Activated B cell treated with CpG ODN at 0.5 μM for 24 hours (primary cell): ENCODE measurements at regions of chr22 and their contacts with region 1.

Region 1: GRCh38 chr22:31943976-31944699 is at the start of gene YWHAH:
- DNase-seq: peak; percentile 91
- ATAC-seq: peak; percentile 78
- H3K4me3 Mint-ChIP-seq: peak within 1 kb of the TSS; percentile 91
- H3K27ac Mint-ChIP-seq: peak within 1 kb of the TSS; percentile 91
- H3K4me1 Mint-ChIP-seq: peaks cover 16% of the 10 kb centered on the region
- H3K27me3 Mint-ChIP-seq: no peaks in the 10 kb centered on the region
- CTCF ChIP-seq: no peak
- total RNA-seq, gene YWHAH: 44.3 and 48.9 TPM in 2 replicates

Region 2: GRCh38 chr22:31345331-31346254 is 598.5 kb before region 1 on chr22:
- CTCF ChIA-PET with region 1: no interaction called
- POLR2A ChIA-PET with region 1: interaction called, 4 read pairs
- intact Hi-C with region 1: loop called (anchors 5 kb)
- DNase-seq: peak; percentile 89
- ATAC-seq: peak; percentile 58
- H3K4me3 Mint-ChIP-seq: peak overlapping the region; percentile 83
- H3K27ac Mint-ChIP-seq: peak overlapping the region; percentile 80
- H3K4me1 Mint-ChIP-seq: peaks cover 50% of the 10 kb centered on the region
- H3K27me3 Mint-ChIP-seq: no peaks in the 10 kb centered on the region
- CTCF ChIP-seq: peak; percentile 56

Region 3: GRCh38 chr22:31630331-31631329 is 313.5 kb before region 1 on chr22:
- CTCF ChIA-PET with region 1: no interaction called
- POLR2A ChIA-PET with region 1: no interaction called
- intact Hi-C with region 1: loop called (anchors 1 kb)
- DNase-seq: peak; percentile 83
- ATAC-seq: peak; percentile 80
- H3K4me3 Mint-ChIP-seq: peak overlapping the region; percentile 88
- H3K27ac Mint-ChIP-seq: peak overlapping the region; percentile 95
- H3K4me1 Mint-ChIP-seq: peaks cover 66% of the 10 kb centered on the region
- H3K27me3 Mint-ChIP-seq: no peaks in the 10 kb centered on the region
- CTCF ChIP-seq: no peak

Region 4: GRCh38 chr22:31749636-31750364 is 194.3 kb before region 1 on chr22 and contains the start of gene PRR14L:
- CTCF ChIA-PET with region 1: no interaction called
- POLR2A ChIA-PET with region 1: interaction called, 4 read pairs
- intact Hi-C with region 1: loop called (anchors 1 kb)
- DNase-seq: peak; percentile 100
- ATAC-seq: peak; percentile 73
- H3K4me3 Mint-ChIP-seq: peak within 1 kb of the TSS; percentile 92
- H3K27ac Mint-ChIP-seq: peak within 1 kb of the TSS; percentile 96
- H3K4me1 Mint-ChIP-seq: peaks cover 52% of the 10 kb centered on the region
- H3K27me3 Mint-ChIP-seq: no peaks in the 10 kb centered on the region
- CTCF ChIP-seq: no peak
- total RNA-seq, gene PRR14L: 49.7 and 59.5 TPM in 2 replicates

Region 5: DNA sequence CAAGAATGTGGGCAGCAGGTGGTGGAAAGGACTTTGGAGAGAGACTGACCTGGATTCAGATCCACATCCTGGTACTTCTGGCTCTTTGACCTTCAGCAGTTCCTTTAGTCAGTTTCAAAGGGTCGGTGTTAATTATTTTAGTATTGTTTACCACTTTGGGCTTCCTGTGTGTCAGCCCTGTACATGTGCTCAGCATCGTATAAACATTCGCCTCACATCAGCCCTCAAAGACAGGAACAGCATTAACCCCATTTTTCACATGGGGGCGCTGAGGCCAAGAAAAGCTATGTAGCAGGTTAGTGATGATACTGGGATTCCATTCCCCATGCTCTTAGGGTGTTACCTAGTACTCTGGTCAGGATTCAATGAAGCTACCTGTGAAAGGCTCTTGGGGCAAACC is 71.9 kb before region 1 on chr22:
- CTCF ChIA-PET with region 1: interaction called, 4 read pairs
- POLR2A ChIA-PET with region 1: no interaction called
- intact Hi-C with region 1: loop called (anchors 2 kb)
- DNase-seq: no peak
- ATAC-seq: no peak
- H3K4me3 Mint-ChIP-seq: no peak overlapping the region
- H3K27ac Mint-ChIP-seq: no peak overlapping the region
- H3K4me1 Mint-ChIP-seq: peaks cover 11% of the 10 kb centered on the region
- H3K27me3 Mint-ChIP-seq: no peaks in the 10 kb centered on the region
- CTCF ChIP-seq: no peak

Region 6: GRCh38 chr22:31970490-31971444 is 26.6 kb after region 1 on chr22:
- CTCF ChIA-PET with region 1: interaction called, 5 read pairs
- POLR2A ChIA-PET with region 1: interaction called, 4 read pairs
- intact Hi-C with region 1: loop called (anchors 1 kb)
- DNase-seq: peak; percentile 86
- ATAC-seq: peak; percentile 95
- H3K4me3 Mint-ChIP-seq: peak overlapping the region; percentile 76
- H3K27ac Mint-ChIP-seq: peak overlapping the region; percentile 65
- H3K4me1 Mint-ChIP-seq: peaks cover 18% of the 10 kb centered on the region
- H3K27me3 Mint-ChIP-seq: no peaks in the 10 kb centered on the region
- CTCF ChIP-seq: peak; percentile 30

Region 7: GRCh38 chr22:32684822-32685187 is 740.7 kb after region 1 on chr22:
- CTCF ChIA-PET with region 1: no interaction called
- POLR2A ChIA-PET with region 1: no interaction called
- intact Hi-C with region 1: no loop called
- DNase-seq: no peak
- ATAC-seq: no peak
- H3K4me3 Mint-ChIP-seq: no peak overlapping the region
- H3K27ac Mint-ChIP-seq: no peak overlapping the region
- H3K4me1 Mint-ChIP-seq: no peaks in the 10 kb centered on the region
- H3K27me3 Mint-ChIP-seq: peaks cover 7% of the 10 kb centered on the region
- CTCF ChIP-seq: no peak